ENCODE measurements at regions of chr17 and their contacts with region 1.

Region 1: DNA sequence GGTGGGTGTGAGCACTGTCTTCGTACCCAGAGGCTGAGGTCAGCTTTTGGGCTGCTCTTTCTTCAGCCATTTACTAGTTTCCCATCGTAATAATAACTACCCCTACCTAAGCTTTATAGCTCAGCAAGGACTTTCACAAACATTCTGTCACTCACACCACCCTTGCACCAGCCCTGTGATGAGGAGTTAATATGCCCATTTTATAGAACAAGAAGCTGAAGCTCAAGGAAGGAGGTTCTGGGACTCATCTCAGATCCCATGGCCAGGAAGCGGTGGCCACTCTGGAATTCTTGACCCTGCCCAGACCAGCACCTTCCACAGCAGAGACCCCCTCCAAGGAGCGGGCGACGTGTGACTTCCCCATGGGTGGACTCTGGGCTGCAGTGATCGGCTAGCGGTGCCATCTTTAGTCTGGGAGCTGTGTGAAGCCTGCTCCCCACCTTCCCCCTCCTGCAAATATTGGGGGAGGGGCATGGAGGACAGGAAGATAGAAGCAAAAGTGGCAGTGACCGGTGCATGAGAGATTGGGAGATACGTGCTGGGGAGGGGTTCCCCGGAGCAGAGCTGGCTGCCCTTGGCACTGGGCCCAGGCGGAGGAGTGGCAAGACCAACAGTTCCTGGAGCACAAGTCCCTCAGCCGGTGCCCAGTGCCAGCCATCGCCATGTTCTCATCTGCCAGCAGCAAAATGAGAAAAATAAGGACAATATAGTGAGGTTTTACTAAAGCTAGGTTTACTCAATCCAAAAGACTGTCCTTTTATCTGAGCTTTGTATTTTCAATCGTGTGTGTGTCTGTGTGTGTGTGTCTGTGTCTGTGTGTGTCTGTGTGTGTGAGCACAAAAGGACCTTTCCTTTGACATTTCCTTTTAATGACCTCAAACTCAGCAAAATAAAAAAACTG is 81.9 kb upstream of the TOB1 start:
- DNase-seq: peak; percentile 81
- H3K4me3 ChIP-seq: no peak overlapping the region
- H3K27ac ChIP-seq: peak overlapping the region in 7 of 8 donors; percentile 13 to 91 (median 81)
- H3K4me1 ChIP-seq: peaks cover 31 to 76% (median 55%) of the 10 kb centered on the region in 6 donors
- H3K27me3 ChIP-seq: peaks cover 0 to 20% (median 0%) of the 10 kb centered on the region in 7 donors
- CTCF ChIP-seq: no peak
- POLR2A ChIP-seq: no peak

Region 2: DNA sequence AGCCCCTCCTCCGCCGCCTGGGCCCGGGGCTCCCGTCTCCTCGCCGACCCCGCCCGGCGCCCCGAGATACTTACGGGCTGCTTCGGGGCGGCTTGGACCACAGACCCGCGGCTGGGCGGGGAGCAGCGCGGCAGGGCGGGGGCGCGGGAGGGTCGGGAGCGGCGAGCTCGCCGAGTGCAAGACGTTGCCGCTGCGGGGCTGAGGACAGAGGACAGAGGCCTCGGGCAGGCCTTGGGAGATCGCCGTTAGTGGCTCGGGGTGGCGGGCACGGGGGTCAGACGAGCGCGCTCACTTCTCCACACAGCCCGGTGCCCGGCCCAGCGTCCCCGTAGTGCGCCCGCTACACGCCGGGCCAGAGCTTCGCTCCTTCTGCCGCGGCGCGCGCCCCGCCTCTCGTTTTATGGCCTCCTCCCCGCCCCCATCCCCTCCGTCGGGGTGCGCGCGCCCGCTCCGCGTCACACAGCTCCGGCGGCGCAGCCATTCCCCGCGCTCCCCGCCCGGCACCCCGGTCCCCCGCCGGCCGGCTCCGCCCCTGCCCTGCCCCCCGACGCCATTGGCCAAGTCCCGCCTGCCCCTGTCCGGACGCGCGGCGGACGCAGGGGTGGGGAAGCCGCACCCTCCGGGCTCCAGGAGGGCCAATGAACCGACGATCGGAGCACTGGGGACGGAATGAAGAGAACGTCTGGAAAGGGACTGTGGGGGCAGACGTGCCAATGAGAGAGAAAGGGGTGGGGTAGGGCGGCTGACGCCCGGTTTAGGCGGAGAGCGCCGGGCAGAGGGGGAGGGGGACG is 81.9 kb before region 1 on chr17 and contains the start of gene TOB1:
- intact Hi-C with region 1: loop called (anchors 2 kb)
- DNase-seq: peak; percentile 100
- H3K4me3 ChIP-seq: peak within 1 kb of the TSS; percentile 45 to 88 (median 82)
- H3K27ac ChIP-seq: peak within 1 kb of the TSS; percentile 88 to 100 (median 100)
- H3K4me1 ChIP-seq: peaks cover 13 to 69% (median 52%) of the 10 kb centered on the region in 6 donors
- H3K27me3 ChIP-seq: no peaks in the 10 kb centered on the region
- CTCF ChIP-seq: peak in 2 of 11 experiments; percentile 9 to 41
- POLR2A ChIP-seq: peak; percentile 97 to 99 (median 99)
- total RNA-seq, gene TOB1: 20.0 to 42.3 (median 26.3) TPM